AG04450 (cell line): ENCODE measurements at regions of chr10 and their contacts with region 1.

Region 1: GRCh38 chr10:63629363-63630084 is 108.3 kb downstream of the REEP3 start:
- DNase-seq: peak; percentile 95
- H3K4me3 ChIP-seq: peak overlapping the region; percentile 79
- H3K27ac ChIP-seq: peak overlapping the region; percentile 99
- H3K27me3 ChIP-seq: no peaks in the 10 kb centered on the region
- CTCF ChIP-seq: peak; percentile 89

Region 2: GRCh38 chr10:63206997-63207811 is 422.3 kb before region 1 on chr10:
- CTCF ChIA-PET with region 1: interaction called, 12 read pairs
- POLR2A ChIA-PET with region 1: no interaction called
- DNase-seq: peak; percentile 55
- H3K4me3 ChIP-seq: peak overlapping the region; percentile 14; the same call in 1 of the 2 replicates
- H3K27ac ChIP-seq: peak overlapping the region; percentile 65
- H3K27me3 ChIP-seq: no peaks in the 10 kb centered on the region
- CTCF ChIP-seq: no peak

Region 3: GRCh38 chr10:63268798-63269503 is 360.6 kb before region 1 on chr10:
- CTCF ChIA-PET with region 1: interaction called, 18 read pairs
- POLR2A ChIA-PET with region 1: interaction called, 26 read pairs
- DNase-seq: peak; percentile 84
- H3K4me3 ChIP-seq: peak overlapping the region; percentile 65
- H3K27ac ChIP-seq: peak overlapping the region; percentile 93
- H3K27me3 ChIP-seq: no peaks in the 10 kb centered on the region
- CTCF ChIP-seq: peak; percentile 33

Region 4: GRCh38 chr10:64773357-64773756 is 1143.8 kb after region 1 on chr10:
- CTCF ChIA-PET with region 1: no interaction called
- POLR2A ChIA-PET with region 1: no interaction called
- DNase-seq: no peak
- H3K4me3 ChIP-seq: no peak overlapping the region
- H3K27ac ChIP-seq: no peak overlapping the region
- H3K27me3 ChIP-seq: no peaks in the 10 kb centered on the region
- CTCF ChIP-seq: no peak